Cardiac septum (tissue), 1 donor: ENCODE measurements at regions of chr20 and their contacts with region 1.

Region 1: DNA sequence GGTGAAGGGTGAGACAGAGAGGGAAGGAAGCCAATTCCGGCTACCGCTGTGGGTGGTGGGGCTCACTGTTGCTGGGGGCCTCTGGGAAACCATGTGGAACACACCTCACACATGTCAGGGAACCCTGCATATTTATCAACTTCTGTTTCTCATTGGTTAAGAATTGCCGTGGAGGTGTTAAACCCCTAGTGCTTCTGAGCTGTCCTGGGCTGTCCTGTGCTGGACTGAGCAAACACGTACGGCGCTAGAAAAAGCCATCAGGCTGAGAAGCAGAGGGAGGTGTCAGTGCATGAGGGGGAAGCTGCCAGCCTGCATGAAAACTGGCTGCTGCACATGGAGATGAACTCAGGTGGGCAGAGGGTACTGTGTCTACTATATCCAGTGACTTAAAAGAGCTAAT is 103.9 kb upstream of the JAG1 start:
- DNase-seq: no peak

Region 2: GRCh38 chr20:10721137-10721896 is 56.4 kb before region 1 on chr20:
- intact Hi-C with region 1: loop called (anchors 5 kb)
- DNase-seq: no peak

Region 3: DNA sequence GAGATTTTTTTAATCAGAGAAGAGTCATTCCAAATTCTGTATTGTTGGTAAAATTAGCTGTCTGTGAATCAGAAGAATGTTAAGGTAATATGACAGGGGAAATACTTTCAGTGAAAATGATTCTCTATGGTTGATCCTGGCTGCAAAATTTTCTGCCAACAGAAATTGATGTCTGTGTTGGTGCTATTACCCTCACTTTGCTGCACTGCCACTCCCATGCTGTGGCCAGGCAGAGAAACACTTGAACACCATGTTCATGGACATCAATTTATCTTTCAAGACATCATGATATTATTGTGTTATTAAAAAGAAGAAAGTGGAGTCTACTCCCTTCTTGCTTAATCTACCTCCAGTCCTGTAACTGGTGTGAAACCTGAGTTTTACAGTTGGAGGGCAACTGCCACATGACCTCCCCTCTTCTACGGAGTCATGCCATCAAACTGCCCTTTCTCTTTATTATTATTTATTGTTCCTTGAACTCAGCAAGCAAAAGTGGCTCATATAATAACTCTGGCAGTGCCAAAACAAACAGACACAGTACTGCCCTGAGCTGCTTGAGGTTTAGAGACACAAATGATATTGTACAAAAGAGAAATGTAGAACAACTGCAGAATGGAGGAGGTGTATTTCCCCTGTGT is 184.1 kb after region 1 on chr20:
- intact Hi-C with region 1: no loop called
- DNase-seq: no peak